GM13977 (cell line): ENCODE measurements at regions of chr1 and their contacts with region 1.

Region 1: DNA sequence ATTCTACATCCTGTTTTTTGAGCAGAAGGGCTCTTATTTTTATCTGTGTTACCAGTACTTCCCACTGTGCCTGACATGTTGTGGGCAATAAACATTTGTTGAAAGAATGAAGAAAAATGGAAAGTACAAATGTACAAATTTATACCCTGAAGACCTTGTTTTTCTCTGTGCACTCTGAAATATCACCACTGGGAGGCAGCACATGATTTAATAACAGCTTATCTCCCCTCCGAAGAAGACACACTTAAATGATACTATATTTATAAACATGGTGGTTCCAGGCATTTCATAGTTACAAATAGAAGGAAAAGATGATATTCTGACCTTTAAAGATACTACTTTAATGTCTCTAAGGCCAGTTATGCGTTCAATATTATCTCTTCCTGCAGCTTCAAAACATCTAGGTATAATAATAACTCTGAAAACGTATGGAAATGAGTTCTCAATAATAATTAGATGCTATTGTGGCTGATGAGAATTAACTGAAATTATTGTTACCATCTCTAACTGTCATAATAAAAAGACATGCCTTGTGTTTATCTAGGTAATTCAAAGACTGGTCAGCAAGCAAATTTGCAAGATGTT is 12.8 kb downstream of the DYNLT5 start:
- DNase-seq: peak; percentile 35
- CTCF ChIP-seq: peak; percentile 72

Region 2: GRCh38 chr1:66533804-66534740 is 231.0 kb before region 1 on chr1 and contains the start of gene SGIP1:
- in situ Hi-C with region 1: no loop called
- DNase-seq: peak; percentile 35
- CTCF ChIP-seq: no peak

Region 3: DNA sequence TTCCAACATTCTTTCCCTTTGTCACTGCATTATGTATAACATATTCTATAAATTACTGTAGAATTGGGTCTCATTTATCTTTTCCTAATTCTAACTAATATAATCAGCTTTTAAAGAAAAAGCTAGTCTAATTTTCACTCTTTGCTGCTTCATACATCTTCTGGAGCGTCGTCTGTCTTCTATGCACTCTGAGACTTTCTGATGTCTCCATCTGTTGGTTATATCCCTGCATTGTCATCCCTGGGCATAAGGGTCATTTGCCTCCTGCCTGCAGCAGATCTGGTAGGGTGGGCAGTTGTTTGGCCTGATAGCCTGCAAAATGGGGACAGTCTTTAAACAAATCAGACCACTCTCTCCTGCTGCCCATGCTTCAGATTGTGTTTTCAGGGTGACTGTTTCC is 53.7 kb before region 1 on chr1:
- in situ Hi-C with region 1: no loop called
- DNase-seq: no peak
- CTCF ChIP-seq: no peak

Region 4: DNA sequence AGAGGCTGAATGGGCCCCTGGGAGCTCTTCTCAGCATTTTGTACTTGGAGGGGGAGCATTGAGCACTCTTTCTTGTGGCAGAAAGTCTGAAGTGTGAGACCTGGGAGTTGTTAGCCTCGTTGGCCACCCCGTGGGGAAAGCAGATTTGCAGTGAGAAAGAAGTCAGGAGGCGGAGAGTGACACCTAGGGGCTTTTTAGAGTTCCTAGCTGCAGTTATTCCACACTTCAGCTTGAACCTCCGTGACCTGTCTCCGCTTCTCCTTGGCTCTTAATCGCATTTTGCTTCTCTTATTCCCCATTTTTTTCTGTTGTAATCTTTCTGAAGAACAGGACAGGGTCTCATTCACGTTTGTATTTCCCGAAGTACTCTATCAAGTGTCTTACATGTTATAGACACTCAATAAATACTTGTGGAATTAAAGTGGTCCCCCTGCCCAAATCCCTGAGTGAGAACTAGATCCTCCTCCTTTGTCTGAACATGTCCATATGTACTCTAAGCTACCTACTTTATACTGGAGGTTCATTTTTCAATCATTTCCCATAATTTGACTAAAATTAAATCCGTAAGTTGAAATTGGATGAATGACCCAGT is 384.2 kb after region 1 on chr1:
- in situ Hi-C with region 1: loop called (anchors 10 kb)
- DNase-seq: peak; percentile 68
- CTCF ChIP-seq: peak; percentile 71

Region 5: DNA sequence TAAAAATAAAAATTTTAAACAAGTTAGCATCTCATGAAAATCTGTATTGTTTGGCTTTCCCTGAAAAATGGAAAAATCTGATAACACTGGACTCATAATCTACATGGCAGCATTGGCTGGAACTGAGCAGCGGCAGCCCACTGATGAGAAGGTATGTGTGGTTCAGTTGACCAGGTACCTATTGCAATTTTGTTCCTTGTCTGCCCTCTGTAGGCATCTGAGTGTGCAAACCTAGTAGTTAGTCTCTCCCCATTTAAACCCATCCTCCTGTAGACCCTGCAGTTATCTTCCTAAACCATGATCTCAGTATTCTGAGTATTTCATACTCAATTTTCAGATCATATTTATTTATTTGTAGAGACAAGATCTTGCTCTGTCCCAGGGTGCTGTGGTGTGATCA is 724.6 kb after region 1 on chr1:
- in situ Hi-C with region 1: loop called (anchors 25 kb)
- DNase-seq: peak; percentile 55
- CTCF ChIP-seq: peak; percentile 47